Endothelial cell of umbilical vein (primary cell): ENCODE measurements at regions of chr22 and their contacts with region 1.

Region 1: DNA sequence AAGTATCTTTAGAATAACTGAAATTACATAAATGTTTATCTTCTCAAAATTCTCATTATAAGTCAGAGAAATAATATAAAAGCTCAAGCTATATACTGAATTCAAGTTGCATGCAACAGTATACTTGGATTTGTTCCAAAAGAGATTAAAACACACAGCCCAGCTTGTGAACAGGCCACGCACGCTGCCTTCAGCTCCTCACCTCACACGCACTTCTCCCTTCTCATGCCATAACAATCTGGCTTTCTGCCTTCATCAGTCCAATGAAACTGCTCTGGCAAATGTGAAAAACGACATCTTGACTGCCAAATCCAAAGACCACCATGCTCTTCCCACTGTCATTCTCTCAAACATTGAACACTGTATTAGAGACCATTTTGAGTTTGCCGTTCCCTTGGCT is 22.1 kb downstream of the ATP6V1E1 start:
- DNase-seq: no peak
- H3K4me3 ChIP-seq: no peak overlapping the region
- H3K27ac ChIP-seq: no peak overlapping the region
- H3K4me1 ChIP-seq: no peaks in the 10 kb centered on the region
- H3K27me3 ChIP-seq: no peaks in the 10 kb centered on the region
- CTCF ChIP-seq: no peak
- POLR2A ChIP-seq: no peak

Region 2: GRCh38 chr22:17403906-17404305 is 202.6 kb before region 1 on chr22:
- CTCF ChIA-PET with region 1: no interaction called
- POLR2A ChIA-PET with region 1: no interaction called
- dilution Hi-C with region 1: no loop called
- intact Hi-C with region 1: no loop called
- DNase-seq: no peak
- H3K4me3 ChIP-seq: no peak overlapping the region
- H3K27ac ChIP-seq: no peak overlapping the region
- H3K4me1 ChIP-seq: peaks cover 16% of the 10 kb centered on the region
- H3K27me3 ChIP-seq: peaks cover 0 to 5% of the 10 kb centered on the region in 2 experiments
- CTCF ChIP-seq: no peak
- POLR2A ChIP-seq: no peak

Region 3: GRCh38 chr22:17570851-17571641 is 35.5 kb before region 1 on chr22:
- CTCF ChIA-PET with region 1: no interaction called
- POLR2A ChIA-PET with region 1: no interaction called
- dilution Hi-C with region 1: no loop called
- intact Hi-C with region 1: loop called (anchors 2 kb)
- DNase-seq: no peak
- H3K4me3 ChIP-seq: no peak overlapping the region
- H3K27ac ChIP-seq: no peak overlapping the region
- H3K4me1 ChIP-seq: peaks cover 3% of the 10 kb centered on the region
- H3K27me3 ChIP-seq: no peaks in the 10 kb centered on the region
- CTCF ChIP-seq: no peak
- POLR2A ChIP-seq: no peak

Region 4: GRCh38 chr22:17665854-17666253 is 59.4 kb after region 1 on chr22:
- CTCF ChIA-PET with region 1: no interaction called
- POLR2A ChIA-PET with region 1: no interaction called
- dilution Hi-C with region 1: no loop called
- intact Hi-C with region 1: no loop called
- DNase-seq: no peak
- H3K4me3 ChIP-seq: no peak overlapping the region
- H3K27ac ChIP-seq: no peak overlapping the region
- H3K4me1 ChIP-seq: no peaks in the 10 kb centered on the region
- H3K27me3 ChIP-seq: no peaks in the 10 kb centered on the region
- CTCF ChIP-seq: no peak
- POLR2A ChIP-seq: no peak

Region 5: DNA sequence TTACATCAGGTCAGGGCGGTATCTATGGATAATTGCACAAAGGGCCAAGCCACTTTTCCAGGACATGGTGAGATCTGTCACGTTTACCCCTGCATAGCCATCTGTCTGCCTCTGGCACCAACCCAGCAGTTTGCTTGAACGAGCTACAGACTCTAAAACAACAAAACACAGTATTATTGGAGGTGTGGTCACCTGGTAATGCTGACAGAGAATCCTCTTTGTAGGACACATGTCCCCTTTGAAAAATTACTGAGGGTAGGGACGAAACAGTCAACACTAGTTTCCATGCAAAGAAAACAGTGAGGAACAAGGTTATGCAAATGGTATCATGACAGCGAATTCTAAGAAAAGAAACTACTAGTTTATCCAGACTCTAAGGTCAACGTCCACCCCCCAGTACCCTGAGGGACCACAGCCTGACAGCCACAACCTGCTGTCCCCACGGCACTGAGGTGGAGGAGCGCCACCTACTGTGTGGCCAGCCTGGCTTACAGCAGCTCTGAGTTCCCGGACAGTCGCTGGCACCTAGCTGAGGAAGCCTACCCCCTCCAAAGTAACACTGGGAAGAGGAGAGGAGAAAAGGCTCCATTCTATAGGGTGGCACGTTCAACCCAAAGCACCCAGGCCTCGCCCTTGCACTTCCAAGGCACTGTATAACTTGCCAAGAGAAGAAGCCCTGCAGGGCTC is 285.1 kb after region 1 on chr22:
- CTCF ChIA-PET with region 1: no interaction called
- POLR2A ChIA-PET with region 1: no interaction called
- dilution Hi-C with region 1: no loop called
- intact Hi-C with region 1: no loop called
- DNase-seq: no peak
- H3K4me3 ChIP-seq: no peak overlapping the region
- H3K27ac ChIP-seq: no peak overlapping the region
- H3K4me1 ChIP-seq: no peaks in the 10 kb centered on the region
- H3K27me3 ChIP-seq: no peaks in the 10 kb centered on the region
- CTCF ChIP-seq: no peak
- POLR2A ChIP-seq: no peak